Activated CD4-positive, alpha-beta memory T cell treated with anti-CD3 and anti-CD28 coated beads for 36 hours (primary cell): ENCODE measurements at regions of chr1 and their contacts with region 1.

Region 1: GRCh38 chr1:174999216-174999925 is 376 bp upstream of the CACYBP start:
- DNase-seq: peak; percentile 98
- H3K4me3 Mint-ChIP-seq: no peak overlapping the region
- H3K27ac Mint-ChIP-seq: no peak overlapping the region
- H3K4me1 Mint-ChIP-seq: peaks cover 49% of the 10 kb centered on the region
- H3K27me3 Mint-ChIP-seq: no peaks in the 10 kb centered on the region

Region 2: GRCh38 chr1:173824331-173825081 is 1174.9 kb before region 1 on chr1 and contains the starts of genes CENPL and DARS2:
- CTCF ChIA-PET with region 1: no interaction called
- POLR2A ChIA-PET with region 1: no interaction called
- intact Hi-C with region 1: loop called (anchors 1 kb)
- DNase-seq: peak; percentile 95
- H3K4me3 Mint-ChIP-seq: peak within 1 kb of the TSS; percentile 98
- H3K27ac Mint-ChIP-seq: peak within 1 kb of the TSS; percentile 99
- H3K4me1 Mint-ChIP-seq: peaks cover 45% of the 10 kb centered on the region
- H3K27me3 Mint-ChIP-seq: no peaks in the 10 kb centered on the region
- total RNA-seq, gene CENPL: 24.5 to 26.3 TPM
- total RNA-seq, gene DARS2: 43.1 to 43.6 TPM

Region 3: GRCh38 chr1:174159252-174160108 is 839.9 kb before region 1 on chr1 and contains the start of gene RABGAP1L:
- CTCF ChIA-PET with region 1: no interaction called
- POLR2A ChIA-PET with region 1: no interaction called
- intact Hi-C with region 1: loop called (anchors 10 kb)
- DNase-seq: peak; percentile 95
- H3K4me3 Mint-ChIP-seq: peak within 1 kb of the TSS; percentile 99
- H3K27ac Mint-ChIP-seq: peak within 1 kb of the TSS; percentile 94
- H3K4me1 Mint-ChIP-seq: peaks cover 60% of the 10 kb centered on the region
- H3K27me3 Mint-ChIP-seq: no peaks in the 10 kb centered on the region
- total RNA-seq, gene RABGAP1L: 30.5 to 30.9 TPM

Region 4: DNA sequence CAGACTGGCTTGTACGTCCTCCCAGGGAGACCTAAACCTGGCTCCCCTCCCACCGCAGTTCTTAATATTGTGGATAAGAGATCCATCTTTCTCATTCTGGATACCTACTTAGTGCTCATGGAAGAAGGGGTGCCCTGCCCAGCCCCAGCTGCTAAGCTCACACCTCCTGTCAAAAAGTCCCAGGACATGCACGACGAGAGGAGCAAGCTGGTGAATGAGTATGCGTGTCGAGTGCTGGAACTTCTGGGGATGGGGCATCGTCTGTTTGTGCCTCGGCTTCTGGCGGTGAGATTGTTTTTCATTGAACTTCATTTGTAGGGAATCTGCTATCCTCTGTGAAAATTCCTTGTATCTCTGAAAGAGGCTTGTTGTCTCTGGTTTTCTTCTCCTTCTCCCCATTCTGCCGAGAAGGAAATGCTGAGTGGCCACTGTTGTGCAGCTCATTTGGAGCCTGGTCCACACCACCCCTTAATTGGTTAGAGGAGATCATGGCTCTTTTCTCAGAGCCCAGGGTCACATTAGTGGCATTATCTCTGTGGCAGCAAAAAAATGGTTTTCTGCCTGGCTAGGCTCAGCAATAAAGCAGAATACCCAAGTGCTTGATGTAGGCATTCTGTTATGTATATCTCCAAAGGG is 199.0 kb before region 1 on chr1:
- CTCF ChIA-PET with region 1: interaction called, 6 read pairs
- POLR2A ChIA-PET with region 1: interaction called, 18 read pairs
- intact Hi-C with region 1: loop called (anchors 1 kb)
- DNase-seq: peak; percentile 33
- H3K4me3 Mint-ChIP-seq: no peak overlapping the region
- H3K27ac Mint-ChIP-seq: no peak overlapping the region
- H3K4me1 Mint-ChIP-seq: peaks cover 5% of the 10 kb centered on the region
- H3K27me3 Mint-ChIP-seq: no peaks in the 10 kb centered on the region

Region 5: GRCh38 chr1:174976436-174977108 is 22.8 kb before region 1 on chr1:
- CTCF ChIA-PET with region 1: interaction called, 12 read pairs
- POLR2A ChIA-PET with region 1: interaction called, 4 read pairs
- intact Hi-C with region 1: no loop called
- DNase-seq: peak; percentile 27
- H3K4me3 Mint-ChIP-seq: no peak overlapping the region
- H3K27ac Mint-ChIP-seq: peak overlapping the region; percentile 58
- H3K4me1 Mint-ChIP-seq: peaks cover 51% of the 10 kb centered on the region
- H3K27me3 Mint-ChIP-seq: no peaks in the 10 kb centered on the region

Region 6: GRCh38 chr1:175192630-175193526 is 193.5 kb after region 1 on chr1 and contains the start of gene KIAA0040:
- CTCF ChIA-PET with region 1: no interaction called
- POLR2A ChIA-PET with region 1: no interaction called
- intact Hi-C with region 1: loop called (anchors 2 kb)
- DNase-seq: peak; percentile 71
- H3K4me3 Mint-ChIP-seq: peak within 1 kb of the TSS; percentile 95
- H3K27ac Mint-ChIP-seq: peak within 1 kb of the TSS; percentile 93
- H3K4me1 Mint-ChIP-seq: peaks cover 48% of the 10 kb centered on the region
- H3K27me3 Mint-ChIP-seq: no peaks in the 10 kb centered on the region
- total RNA-seq, gene KIAA0040: 32.9 to 34.5 TPM

Region 7: DNA sequence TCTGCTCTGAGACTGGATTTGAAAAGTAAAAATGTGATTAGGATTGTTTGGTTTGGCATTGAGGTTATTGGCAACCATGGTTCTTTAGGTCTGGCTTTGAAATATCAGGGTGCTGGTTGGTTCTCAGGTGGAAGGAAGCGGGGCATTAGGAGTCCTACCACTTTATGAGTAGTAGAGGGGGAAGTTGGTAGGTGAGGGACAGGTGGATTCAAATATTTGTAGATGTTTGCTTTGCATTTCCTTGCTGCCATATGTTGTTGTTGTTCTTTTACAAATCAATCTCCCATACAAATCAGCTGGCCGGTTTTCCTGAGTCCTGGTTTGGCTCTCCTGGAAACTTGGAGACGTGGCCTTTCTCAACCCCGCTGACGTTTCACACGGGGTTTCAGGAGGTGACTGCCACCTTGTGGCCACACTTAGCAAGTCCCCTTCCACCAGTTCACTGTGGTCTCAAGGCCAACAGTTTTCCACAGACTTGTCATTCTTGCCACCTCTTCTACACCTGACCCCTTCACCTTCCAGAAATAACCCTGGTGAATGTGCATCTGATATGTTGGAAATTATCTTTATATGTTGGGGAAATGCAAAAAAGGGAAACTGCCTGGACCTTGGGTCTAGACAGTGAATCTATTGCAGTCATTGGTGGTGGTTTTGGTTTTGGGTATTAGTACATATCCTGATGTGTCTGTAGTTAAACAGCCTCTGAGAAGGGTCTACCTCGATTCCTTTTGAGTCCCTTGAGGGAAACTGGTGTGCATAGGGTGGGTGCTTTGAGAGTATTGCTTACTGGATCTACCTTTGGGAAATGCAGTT is 320.3 kb after region 1 on chr1:
- CTCF ChIA-PET with region 1: no interaction called
- POLR2A ChIA-PET with region 1: no interaction called
- intact Hi-C with region 1: no loop called
- DNase-seq: peak; percentile 76
- H3K4me3 Mint-ChIP-seq: no peak overlapping the region
- H3K27ac Mint-ChIP-seq: no peak overlapping the region
- H3K4me1 Mint-ChIP-seq: peaks cover 14% of the 10 kb centered on the region
- H3K27me3 Mint-ChIP-seq: no peaks in the 10 kb centered on the region

Region 8: GRCh38 chr1:175520186-175520585 is 520.8 kb after region 1 on chr1:
- CTCF ChIA-PET with region 1: no interaction called
- POLR2A ChIA-PET with region 1: no interaction called
- intact Hi-C with region 1: no loop called
- DNase-seq: no peak
- H3K4me3 Mint-ChIP-seq: no peak overlapping the region
- H3K27ac Mint-ChIP-seq: no peak overlapping the region
- H3K4me1 Mint-ChIP-seq: no peaks in the 10 kb centered on the region
- H3K27me3 Mint-ChIP-seq: peaks cover 8% of the 10 kb centered on the region